Right ventricle myocardium inferior (tissue), 1 donor: ENCODE measurements at regions of chr19 and their contacts with region 1.

Region 1: GRCh38 chr19:36489118-36489919 is at the start of gene ZNF566:
- DNase-seq: peak; percentile 92
- ATAC-seq: peak; percentile 98
- total RNA-seq, gene ZNF566: 11.5 TPM

Region 2: GRCh38 chr19:36182612-36183244 is 306.6 kb before region 1 on chr19:
- intact Hi-C with region 1: loop called (anchors 10 kb)
- DNase-seq: no peak
- ATAC-seq: peak; percentile 27

Region 3: DNA sequence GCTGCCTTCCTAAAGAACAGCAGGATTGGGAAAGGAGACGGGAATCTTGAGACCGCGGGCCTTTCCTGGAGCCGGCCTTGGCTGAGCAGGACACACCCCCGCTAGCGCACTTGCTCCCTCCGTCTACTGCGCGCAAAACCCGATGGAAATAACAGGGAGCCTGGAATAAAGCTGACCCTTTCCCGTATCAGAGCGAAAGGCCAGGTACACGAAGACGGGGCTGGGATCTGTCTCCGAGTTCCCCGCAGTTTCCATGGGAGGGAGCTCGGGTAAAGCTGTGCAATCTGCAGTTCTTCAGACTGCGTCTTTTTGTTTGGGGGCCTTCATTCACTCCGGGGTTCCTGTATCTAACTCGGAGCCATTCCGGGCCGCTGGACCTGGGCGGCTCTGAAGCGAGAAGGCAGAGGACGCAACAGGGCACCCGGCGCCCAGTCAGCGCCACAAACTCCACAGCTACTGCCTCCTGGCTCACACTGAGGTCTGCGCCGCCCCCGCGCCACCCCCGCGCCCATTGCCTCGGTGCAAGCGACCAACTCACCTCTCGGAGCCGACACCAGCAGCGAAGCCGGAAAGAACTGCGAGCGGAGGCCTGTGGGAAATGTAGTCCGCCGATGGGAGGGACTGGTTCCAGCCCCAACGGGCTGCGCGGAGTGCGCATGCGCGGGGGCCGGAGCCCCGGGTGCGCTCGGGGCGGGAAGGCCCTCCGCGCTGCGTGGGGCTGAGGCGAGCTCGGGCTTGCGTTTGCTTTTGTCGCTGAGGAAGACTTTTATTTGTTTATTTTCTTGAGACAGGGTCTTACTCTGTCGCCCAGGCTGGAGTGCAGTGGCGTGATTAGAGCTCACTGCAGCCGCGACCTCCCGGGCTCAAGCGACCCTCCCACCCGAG is 110.5 kb before region 1 on chr19 and contains the start of gene ZFP14:
- intact Hi-C with region 1: loop called (anchors 1 kb)
- DNase-seq: peak; percentile 95
- ATAC-seq: peak; percentile 99
- total RNA-seq, gene ZFP14: 3.2 TPM

Region 4: GRCh38 chr19:36418287-36419001 is 70.9 kb before region 1 on chr19 and contains the start of gene ZFP82:
- intact Hi-C with region 1: loop called (anchors 5 kb)
- DNase-seq: peak; percentile 91
- ATAC-seq: peak; percentile 99
- total RNA-seq, gene ZFP82: 4.3 TPM

Region 5: GRCh38 chr19:36460046-36460445 is 29.3 kb before region 1 on chr19:
- intact Hi-C with region 1: no loop called
- DNase-seq: no peak
- ATAC-seq: no peak

Region 6: DNA sequence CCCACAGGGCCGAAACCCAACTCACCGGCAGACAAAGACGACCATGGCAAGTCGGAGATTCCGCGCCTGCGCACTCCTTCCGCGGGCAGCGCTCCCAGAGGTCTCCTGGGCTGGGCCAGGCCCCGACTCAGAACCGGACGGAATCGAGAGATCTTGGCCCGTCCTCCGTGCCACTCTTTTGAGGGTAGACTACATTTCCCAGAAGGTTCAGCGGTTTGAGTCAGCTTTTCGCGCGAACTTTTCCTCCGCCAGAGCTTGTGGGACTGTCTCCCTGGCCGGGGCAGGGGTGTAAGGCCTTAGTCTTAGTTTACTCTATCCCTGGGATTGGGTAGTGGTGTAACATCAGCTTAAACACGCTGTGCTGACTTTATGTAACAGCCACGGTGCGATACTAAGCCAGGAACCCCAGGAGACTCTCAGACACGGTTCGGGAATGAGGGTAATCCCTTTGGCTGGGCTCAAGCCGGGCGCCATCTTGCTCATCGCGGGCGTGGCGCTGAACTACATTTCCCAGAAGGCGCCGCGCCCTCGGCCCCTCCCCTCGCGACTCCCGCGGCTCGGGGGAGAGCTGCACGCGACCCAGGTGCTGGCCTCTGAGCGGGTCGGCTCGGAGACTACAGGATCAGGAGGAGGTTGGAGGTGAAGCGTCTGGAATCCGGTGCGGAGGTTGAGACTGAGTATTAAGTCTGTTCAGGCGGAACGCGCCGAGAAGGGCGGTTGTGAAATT is 39.0 kb after region 1 on chr19 and contains the start of gene ZNF260:
- intact Hi-C with region 1: loop called (anchors 1 kb)
- DNase-seq: peak; percentile 97
- ATAC-seq: peak; percentile 98
- total RNA-seq, gene ZNF260: 9.1 TPM